Esophagus muscularis mucosa (tissue), 4 donors: ENCODE measurements at regions of chr6 and their contacts with region 1.

Region 1: GRCh38 chr6:143450453-143451371 is at the starts of genes ADAT2 and PEX3:
- DNase-seq: peak; percentile 97
- H3K4me3 ChIP-seq: peak within 1 kb of the TSS; percentile 62 to 88 (median 75)
- H3K27ac ChIP-seq: peak within 1 kb of the TSS; percentile 67 to 82 (median 72)
- H3K4me1 ChIP-seq: peaks cover 17 to 41% (median 40%) of the 10 kb centered on the region in 4 donors
- H3K27me3 ChIP-seq: no peaks in the 10 kb centered on the region
- CTCF ChIP-seq: peak in 1 of 3 experiments; percentile 18
- EP300 ChIP-seq: no peak
- POLR2A ChIP-seq: no peak
- total RNA-seq, gene ADAT2: 2.4 to 4.0 (median 3.2) TPM
- total RNA-seq, gene PEX3: 15.1 to 24.1 (median 19.7) TPM

Region 2: DNA sequence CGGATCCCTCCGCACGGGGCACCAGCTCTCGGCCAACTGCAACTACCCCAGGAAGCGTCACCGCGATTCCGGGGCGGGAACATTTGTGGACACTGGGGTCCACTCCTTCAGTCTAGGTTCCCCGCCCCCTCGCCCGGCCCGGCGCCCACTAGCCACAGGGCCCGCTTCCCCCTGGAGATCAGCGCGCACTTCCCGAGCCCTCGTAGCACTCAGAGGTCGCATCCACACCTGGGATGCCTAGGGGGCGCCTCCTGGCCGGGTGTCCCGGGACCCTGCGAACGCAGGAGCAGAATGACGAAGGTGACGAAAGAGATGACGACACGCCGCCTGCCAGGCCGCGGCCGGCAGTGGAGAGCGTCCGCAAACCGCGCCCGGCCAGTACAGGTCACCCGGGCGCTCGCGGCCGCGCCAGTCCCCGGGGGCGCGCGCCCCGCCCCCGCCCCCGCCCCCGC is 390.3 kb before region 1 on chr6:
- intact Hi-C with region 1: loop called (anchors 5 kb)
- DNase-seq: peak; percentile 95
- H3K4me3 ChIP-seq: peak overlapping the region; percentile 70 to 91 (median 80)
- H3K27ac ChIP-seq: peak overlapping the region; percentile 87 to 95 (median 94)
- H3K4me1 ChIP-seq: peaks cover 6 to 34% (median 20%) of the 10 kb centered on the region in 4 donors
- H3K27me3 ChIP-seq: no peaks in the 10 kb centered on the region
- CTCF ChIP-seq: peak in 1 of 3 experiments; percentile 11
- EP300 ChIP-seq: peak; percentile 0
- POLR2A ChIP-seq: peak; percentile 52